ENCODE measurements at regions of chr14 and their contacts with region 1.

Region 1: GRCh38 chr14:22598099-22598899 is at the start of gene ABHD4:
- DNase-seq: peak; percentile 71 to 89 (median 80)
- H3K4me3 ChIP-seq: peak within 1 kb of the TSS; percentile 54 to 96 (median 83)
- H3K27ac ChIP-seq: peak within 1 kb of the TSS in 57 of 59 donors; percentile 12 to 95 (median 77)
- H3K27me3 ChIP-seq: no peaks in the 10 kb centered on the region
- CTCF ChIP-seq: peak in 14 of 56 donors; percentile 5 to 37 (median 20)
- total RNA-seq, gene ABHD4: 9.7 to 36.9 (median 19.7) TPM

Region 2: GRCh38 chr14:22521449-22522239 is 76.7 kb before region 1 on chr14:
- intact Hi-C with region 1: no loop called
- DNase-seq: no peak
- H3K4me3 ChIP-seq: no peak overlapping the region
- H3K27ac ChIP-seq: peak overlapping the region in 2 of 59 donors; percentile 14 to 24
- H3K27me3 ChIP-seq: peaks cover 0 to 5% (median 0%) of the 10 kb centered on the region in 45 donors
- CTCF ChIP-seq: no peak

Region 3: GRCh38 chr14:22715186-22715812 is 117.0 kb after region 1 on chr14:
- intact Hi-C with region 1: loop called in 1 of 2 experiments (anchors 10 kb)
- DNase-seq: no peak
- H3K4me3 ChIP-seq: no peak overlapping the region
- H3K27ac ChIP-seq: no peak overlapping the region
- H3K27me3 ChIP-seq: peaks cover 0 to 25% (median 9%) of the 10 kb centered on the region in 45 donors
- CTCF ChIP-seq: no peak

Region 4: DNA sequence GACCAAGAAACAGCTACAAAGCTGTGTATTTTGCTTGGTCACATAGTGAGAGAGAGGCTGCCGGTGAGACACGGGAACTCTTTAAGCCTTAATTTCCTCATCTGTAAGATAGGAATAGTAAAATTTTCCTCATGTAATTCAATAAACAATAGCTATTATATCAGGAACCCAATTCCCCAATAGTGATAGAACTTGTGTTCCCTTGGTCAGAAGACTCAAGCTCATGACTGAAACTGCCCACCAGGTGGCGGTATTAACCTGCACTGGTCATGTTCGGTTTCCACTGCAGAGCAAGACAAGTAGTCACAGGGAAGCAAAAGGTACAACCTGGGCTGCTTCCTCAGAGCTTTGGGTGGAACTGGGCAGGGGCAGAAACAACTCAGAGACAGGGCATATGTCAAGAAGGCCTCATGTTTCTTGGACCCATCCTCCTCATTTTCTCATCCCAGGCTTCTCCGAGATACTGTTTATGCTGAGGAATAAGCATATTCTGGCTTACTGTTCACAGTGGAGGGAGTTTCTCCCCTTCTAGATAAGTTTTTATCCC is 388.3 kb after region 1 on chr14:
- intact Hi-C with region 1: no loop called
- DNase-seq: peak; percentile 83 to 98 (median 90)
- H3K4me3 ChIP-seq: no peak overlapping the region
- H3K27ac ChIP-seq: no peak overlapping the region
- H3K27me3 ChIP-seq: peaks cover 0 to 14% (median 9%) of the 10 kb centered on the region in 45 donors
- CTCF ChIP-seq: peak; percentile 77 to 99 (median 96)

Measured in dorsolateral prefrontal cortex (tissue), 120 donors.